IMR-90 (cell line): ENCODE measurements at regions of chr11 and their contacts with region 1.

Region 1: GRCh38 chr11:24386546-24387397 is 110.1 kb upstream of the LUZP2 start:
- DNase-seq: peak; percentile 68
- ATAC-seq: peak; percentile 75
- H3K4me3 ChIP-seq: no peak overlapping the region
- H3K27ac ChIP-seq: peak overlapping the region; percentile 22; the same call in 1 of the 2 replicates
- H3K4me1 ChIP-seq: peaks cover 3% of the 10 kb centered on the region; the same call in 1 of the 2 replicates
- H3K27me3 ChIP-seq: no peaks in the 10 kb centered on the region
- CTCF ChIP-seq: peak; percentile 71
- POLR2A ChIP-seq: no peak
- RAD21 ChIP-seq: peak; percentile 71

Region 2: GRCh38 chr11:22875869-22876473 is 1510.8 kb before region 1 on chr11:
- CTCF ChIA-PET with region 1: interaction called, 3 read pairs
- POLR2A ChIA-PET with region 1: no interaction called
- dilution Hi-C with region 1: no loop called
- in situ Hi-C with region 1: loop called (anchors 25 kb)
- intact Hi-C with region 1: loop called (anchors 5 kb)
- DNase-seq: peak; percentile 89
- ATAC-seq: peak; percentile 79
- H3K4me3 ChIP-seq: no peak overlapping the region
- H3K27ac ChIP-seq: no peak overlapping the region
- H3K4me1 ChIP-seq: peaks cover 4% of the 10 kb centered on the region
- H3K27me3 ChIP-seq: no peaks in the 10 kb centered on the region
- CTCF ChIP-seq: peak; percentile 99
- POLR2A ChIP-seq: no peak
- RAD21 ChIP-seq: peak; percentile 90

Region 3: GRCh38 chr11:23112987-23113886 is 1273.5 kb before region 1 on chr11:
- CTCF ChIA-PET with region 1: no interaction called
- POLR2A ChIA-PET with region 1: no interaction called
- dilution Hi-C with region 1: no loop called
- in situ Hi-C with region 1: loop called (anchors 5 kb)
- intact Hi-C with region 1: loop called (anchors 2 kb)
- DNase-seq: peak; percentile 63
- ATAC-seq: peak; percentile 70
- H3K4me3 ChIP-seq: no peak overlapping the region
- H3K27ac ChIP-seq: peak overlapping the region; percentile 75; the same call in 1 of the 2 replicates
- H3K4me1 ChIP-seq: peaks cover 9% of the 10 kb centered on the region
- H3K27me3 ChIP-seq: no peaks in the 10 kb centered on the region
- CTCF ChIP-seq: peak; percentile 80
- POLR2A ChIP-seq: no peak
- RAD21 ChIP-seq: peak; percentile 90

Region 4: DNA sequence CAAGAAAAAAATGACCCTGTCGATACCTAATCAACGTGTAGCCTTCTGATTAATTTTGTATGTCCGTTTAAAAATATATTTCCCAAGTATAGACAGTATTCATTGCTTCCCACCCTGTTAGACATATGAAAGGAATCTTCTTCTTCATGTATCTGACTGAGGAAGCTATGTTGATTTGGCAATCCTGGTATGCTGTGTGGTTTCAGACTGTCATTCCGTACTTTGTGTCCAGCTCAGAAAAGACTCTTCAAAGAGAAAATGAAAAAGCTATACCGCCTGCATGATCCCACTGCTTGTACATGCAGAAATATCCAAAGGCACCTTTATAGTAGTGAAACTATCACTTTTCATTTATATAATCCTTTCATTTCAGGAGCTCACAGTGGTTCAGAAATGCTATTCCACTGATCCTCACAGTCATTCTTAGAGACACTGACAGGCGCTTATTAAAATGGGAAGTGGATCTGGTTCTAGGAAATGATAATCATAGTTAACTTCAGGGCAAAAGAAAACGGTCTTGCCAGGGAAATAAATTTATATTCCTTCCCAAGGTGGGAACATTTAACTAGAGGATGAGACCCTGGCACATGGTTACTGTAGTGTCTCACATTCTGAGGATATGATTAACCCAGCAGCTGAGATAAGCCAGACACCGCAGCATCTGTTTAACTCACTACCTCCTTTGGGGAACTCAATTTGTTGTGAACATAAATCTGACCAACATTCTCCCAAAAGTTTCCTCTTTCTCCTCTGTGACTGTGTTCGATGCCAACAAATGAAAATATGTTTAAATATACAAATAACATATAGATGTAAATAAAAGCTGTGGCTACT is 489.1 kb before region 1 on chr11:
- CTCF ChIA-PET with region 1: no interaction called
- POLR2A ChIA-PET with region 1: no interaction called
- dilution Hi-C with region 1: no loop called
- in situ Hi-C with region 1: no loop called
- intact Hi-C with region 1: loop called (anchors 5 kb)
- DNase-seq: peak; percentile 94
- ATAC-seq: peak; percentile 92
- H3K4me3 ChIP-seq: peak overlapping the region; percentile 29; the same call in 1 of the 2 replicates
- H3K27ac ChIP-seq: peak overlapping the region; percentile 99
- H3K4me1 ChIP-seq: peaks cover 13% of the 10 kb centered on the region
- H3K27me3 ChIP-seq: no peaks in the 10 kb centered on the region
- CTCF ChIP-seq: no peak
- POLR2A ChIP-seq: no peak
- RAD21 ChIP-seq: no peak; the same call in 1 of the 2 replicates

Region 5: DNA sequence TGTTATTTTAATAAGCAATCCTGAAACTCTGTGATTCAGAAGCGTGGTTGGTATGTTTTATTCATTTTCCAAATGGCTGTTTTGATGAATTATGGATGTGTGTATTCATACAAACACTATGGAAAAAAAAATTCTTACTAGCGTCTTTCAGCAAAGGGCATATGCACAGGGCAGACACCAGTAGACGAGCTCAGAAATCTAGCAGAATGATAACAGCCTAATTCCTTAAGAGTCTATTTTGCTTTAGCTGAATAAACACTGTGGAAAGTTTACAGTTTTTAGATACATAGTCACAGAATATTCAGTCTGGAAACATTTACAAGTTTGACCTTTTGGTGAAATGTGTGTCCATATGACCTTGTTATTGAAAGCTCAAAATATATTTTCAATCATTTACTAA is 308.8 kb before region 1 on chr11:
- CTCF ChIA-PET with region 1: no interaction called
- POLR2A ChIA-PET with region 1: no interaction called
- dilution Hi-C with region 1: no loop called
- in situ Hi-C with region 1: no loop called
- intact Hi-C with region 1: loop called (anchors 2 kb)
- DNase-seq: peak; percentile 87
- ATAC-seq: peak; percentile 88
- H3K4me3 ChIP-seq: no peak overlapping the region
- H3K27ac ChIP-seq: peak overlapping the region; percentile 99; the same call in 1 of the 2 replicates
- H3K4me1 ChIP-seq: peaks cover 14% of the 10 kb centered on the region
- H3K27me3 ChIP-seq: no peaks in the 10 kb centered on the region
- CTCF ChIP-seq: no peak
- POLR2A ChIP-seq: no peak
- RAD21 ChIP-seq: no peak